PC-3 (cell line): ENCODE measurements at regions of chr4 and their contacts with region 1.

Region 1: GRCh38 chr4:176443117-176443516 is 123.4 kb downstream of the SPCS3 start:
- DNase-seq: peak; percentile 89
- ATAC-seq: peak; percentile 98
- H3K4me3 ChIP-seq: no peak overlapping the region
- H3K27ac ChIP-seq: peak overlapping the region; percentile 98
- H3K4me1 ChIP-seq: peaks cover 32% of the 10 kb centered on the region
- H3K27me3 ChIP-seq: no peaks in the 10 kb centered on the region
- CTCF ChIP-seq: no peak

Region 2: GRCh38 chr4:174813292-174813691 is 1629.8 kb before region 1 on chr4:
- CTCF ChIA-PET with region 1: no interaction called
- POLR2A ChIA-PET with region 1: no interaction called
- intact Hi-C with region 1: no loop called
- DNase-seq: no peak
- ATAC-seq: no peak
- H3K4me3 ChIP-seq: no peak overlapping the region
- H3K27ac ChIP-seq: no peak overlapping the region
- H3K4me1 ChIP-seq: no peaks in the 10 kb centered on the region
- H3K27me3 ChIP-seq: no peaks in the 10 kb centered on the region
- CTCF ChIP-seq: no peak

Region 3: DNA sequence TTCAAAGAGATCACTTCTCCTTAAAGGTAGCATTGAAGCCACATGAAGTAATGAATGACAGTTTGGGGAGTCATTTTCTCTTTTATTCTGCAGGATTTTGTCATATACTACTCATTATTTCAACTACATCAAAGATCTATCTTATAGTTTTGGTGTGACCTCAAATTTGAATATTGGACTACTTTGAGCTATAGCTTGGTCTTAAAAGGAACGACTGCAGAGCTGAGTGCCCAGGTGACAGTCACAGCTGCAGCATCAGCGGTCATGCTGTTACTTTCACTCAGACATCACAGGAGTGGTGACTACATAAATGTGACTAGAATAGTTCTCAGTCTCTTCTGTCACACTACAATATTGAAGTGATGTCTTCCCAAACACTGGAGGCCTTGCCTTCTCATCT is 134.1 kb before region 1 on chr4:
- CTCF ChIA-PET with region 1: no interaction called
- POLR2A ChIA-PET with region 1: no interaction called
- intact Hi-C with region 1: no loop called
- DNase-seq: no peak
- ATAC-seq: no peak
- H3K4me3 ChIP-seq: no peak overlapping the region
- H3K27ac ChIP-seq: no peak overlapping the region
- H3K4me1 ChIP-seq: peaks cover 14% of the 10 kb centered on the region
- H3K27me3 ChIP-seq: no peaks in the 10 kb centered on the region
- CTCF ChIP-seq: no peak

Region 4: GRCh38 chr4:176383273-176384077 is 59.6 kb before region 1 on chr4:
- CTCF ChIA-PET with region 1: no interaction called
- POLR2A ChIA-PET with region 1: no interaction called
- intact Hi-C with region 1: loop called (anchors 2 kb)
- DNase-seq: peak; percentile 15
- ATAC-seq: peak; percentile 38; the same call in 1 of the 2 replicates
- H3K4me3 ChIP-seq: no peak overlapping the region
- H3K27ac ChIP-seq: peak overlapping the region; percentile 29
- H3K4me1 ChIP-seq: peaks cover 23% of the 10 kb centered on the region
- H3K27me3 ChIP-seq: no peaks in the 10 kb centered on the region
- CTCF ChIP-seq: no peak

Region 5: GRCh38 chr4:176400816-176401461 is 42.2 kb before region 1 on chr4:
- CTCF ChIA-PET with region 1: no interaction called
- POLR2A ChIA-PET with region 1: no interaction called
- intact Hi-C with region 1: loop called (anchors 2 kb)
- DNase-seq: peak; percentile 87
- ATAC-seq: peak; percentile 83
- H3K4me3 ChIP-seq: no peak overlapping the region
- H3K27ac ChIP-seq: peak overlapping the region; percentile 95
- H3K4me1 ChIP-seq: peaks cover 45% of the 10 kb centered on the region
- H3K27me3 ChIP-seq: no peaks in the 10 kb centered on the region
- CTCF ChIP-seq: no peak

Region 6: DNA sequence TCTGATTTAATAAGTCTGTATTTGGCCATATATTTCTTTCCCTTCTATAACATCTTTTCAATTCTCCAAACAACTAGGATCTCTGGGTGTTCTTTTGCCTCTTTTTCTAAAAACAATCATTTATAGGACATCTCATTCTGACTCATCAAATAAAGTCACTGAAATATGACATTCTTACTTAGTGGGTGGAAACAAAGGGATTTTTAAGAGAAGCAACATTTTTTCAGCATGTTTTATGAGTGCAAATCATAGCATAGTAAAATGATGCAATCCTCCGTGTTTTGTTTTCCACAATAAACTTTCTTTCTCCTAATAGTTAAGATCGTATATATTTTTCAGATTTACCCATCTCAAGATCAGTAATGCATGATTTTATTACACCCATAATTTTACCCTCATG is 56.4 kb after region 1 on chr4:
- CTCF ChIA-PET with region 1: no interaction called
- POLR2A ChIA-PET with region 1: interaction called, 4 read pairs
- intact Hi-C with region 1: loop called (anchors 1 kb)
- DNase-seq: peak; percentile 92
- ATAC-seq: peak; percentile 81
- H3K4me3 ChIP-seq: peak overlapping the region; percentile 48
- H3K27ac ChIP-seq: peak overlapping the region; percentile 91
- H3K4me1 ChIP-seq: peaks cover 14% of the 10 kb centered on the region
- H3K27me3 ChIP-seq: no peaks in the 10 kb centered on the region
- CTCF ChIP-seq: no peak

Region 7: DNA sequence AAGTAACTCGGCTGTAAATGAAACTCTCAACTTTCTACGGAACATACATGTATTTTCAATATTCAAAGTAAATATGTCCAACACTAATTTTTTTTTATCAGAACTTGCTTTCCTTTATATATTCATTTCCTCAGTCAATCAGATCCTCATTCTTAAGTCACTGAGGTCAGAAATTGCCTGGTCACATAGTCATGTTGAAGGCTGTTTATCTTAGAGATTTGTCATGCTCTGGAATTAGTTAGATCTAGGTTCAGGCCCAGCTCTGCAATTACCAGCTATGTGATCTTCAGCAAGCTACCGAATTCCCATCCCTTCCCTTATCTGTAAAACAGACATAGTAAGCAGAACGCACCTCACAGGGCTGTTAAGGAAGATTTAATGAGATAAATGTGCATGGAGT is 105.5 kb after region 1 on chr4:
- CTCF ChIA-PET with region 1: no interaction called
- POLR2A ChIA-PET with region 1: interaction called, 3 read pairs
- intact Hi-C with region 1: loop called (anchors 5 kb)
- DNase-seq: peak; percentile 73
- ATAC-seq: peak; percentile 89
- H3K4me3 ChIP-seq: peak overlapping the region; percentile 13; the same call in 1 of the 2 replicates
- H3K27ac ChIP-seq: peak overlapping the region; percentile 81
- H3K4me1 ChIP-seq: peaks cover 30% of the 10 kb centered on the region
- H3K27me3 ChIP-seq: no peaks in the 10 kb centered on the region
- CTCF ChIP-seq: no peak

Region 8: GRCh38 chr4:176642472-176642871 is 199.4 kb after region 1 on chr4:
- CTCF ChIA-PET with region 1: no interaction called
- POLR2A ChIA-PET with region 1: no interaction called
- intact Hi-C with region 1: no loop called
- DNase-seq: no peak
- ATAC-seq: no peak
- H3K4me3 ChIP-seq: no peak overlapping the region
- H3K27ac ChIP-seq: no peak overlapping the region
- H3K4me1 ChIP-seq: peaks cover 15% of the 10 kb centered on the region
- H3K27me3 ChIP-seq: no peaks in the 10 kb centered on the region
- CTCF ChIP-seq: no peak; the same call in 1 of the 2 replicates